ENCODE measurements at regions of chr5 and their contacts with region 1.

Region 1: GRCh38 chr5:175444060-175444904 is at the start of gene DRD1:
- DNase-seq: peak; percentile 69
- ATAC-seq: peak; percentile 86
- H3K4me3 ChIP-seq: peak within 1 kb of the TSS; percentile 45
- H3K27ac ChIP-seq: peak within 1 kb of the TSS; percentile 11
- H3K4me1 ChIP-seq: peaks cover 5% of the 10 kb centered on the region
- H3K27me3 ChIP-seq: peaks cover 46% of the 10 kb centered on the region
- CTCF ChIP-seq: peak; percentile 68
- total RNA-seq, gene DRD1: 0.58 TPM

Region 2: GRCh38 chr5:174945853-174946252 is 498.4 kb before region 1 on chr5:
- intact Hi-C with region 1: loop called (anchors 10 kb)
- DNase-seq: no peak
- ATAC-seq: no peak
- H3K4me3 ChIP-seq: no peak overlapping the region
- H3K27ac ChIP-seq: no peak overlapping the region
- H3K4me1 ChIP-seq: no peaks in the 10 kb centered on the region
- H3K27me3 ChIP-seq: no peaks in the 10 kb centered on the region
- CTCF ChIP-seq: no peak

Region 3: DNA sequence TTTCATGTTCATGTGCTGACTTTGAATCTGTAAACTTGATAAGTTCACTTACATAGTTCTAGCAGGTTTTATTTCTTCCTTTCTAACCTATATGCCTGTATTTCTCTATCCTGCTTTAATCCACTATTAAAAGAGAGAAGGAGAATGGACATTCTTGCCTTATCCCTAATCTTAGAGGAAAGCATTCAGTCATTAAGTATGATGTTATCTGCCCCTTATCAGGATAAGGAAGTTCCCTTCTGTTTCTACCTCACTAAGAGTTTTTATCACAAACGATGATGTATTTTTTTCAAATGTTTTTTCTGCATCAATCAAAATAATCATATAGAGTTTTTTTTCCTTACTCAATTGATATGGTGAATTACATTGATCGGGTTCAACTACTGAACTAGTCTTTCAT is 33.4 kb before region 1 on chr5:
- intact Hi-C with region 1: no loop called
- DNase-seq: no peak
- ATAC-seq: no peak
- H3K4me3 ChIP-seq: no peak overlapping the region
- H3K27ac ChIP-seq: no peak overlapping the region
- H3K4me1 ChIP-seq: peaks cover 3% of the 10 kb centered on the region
- H3K27me3 ChIP-seq: no peaks in the 10 kb centered on the region
- CTCF ChIP-seq: no peak

Measured in upper lobe of right lung (tissue), 1 donor.